ENCODE measurements at regions of chr1 and their contacts with region 1.

Region 1: DNA sequence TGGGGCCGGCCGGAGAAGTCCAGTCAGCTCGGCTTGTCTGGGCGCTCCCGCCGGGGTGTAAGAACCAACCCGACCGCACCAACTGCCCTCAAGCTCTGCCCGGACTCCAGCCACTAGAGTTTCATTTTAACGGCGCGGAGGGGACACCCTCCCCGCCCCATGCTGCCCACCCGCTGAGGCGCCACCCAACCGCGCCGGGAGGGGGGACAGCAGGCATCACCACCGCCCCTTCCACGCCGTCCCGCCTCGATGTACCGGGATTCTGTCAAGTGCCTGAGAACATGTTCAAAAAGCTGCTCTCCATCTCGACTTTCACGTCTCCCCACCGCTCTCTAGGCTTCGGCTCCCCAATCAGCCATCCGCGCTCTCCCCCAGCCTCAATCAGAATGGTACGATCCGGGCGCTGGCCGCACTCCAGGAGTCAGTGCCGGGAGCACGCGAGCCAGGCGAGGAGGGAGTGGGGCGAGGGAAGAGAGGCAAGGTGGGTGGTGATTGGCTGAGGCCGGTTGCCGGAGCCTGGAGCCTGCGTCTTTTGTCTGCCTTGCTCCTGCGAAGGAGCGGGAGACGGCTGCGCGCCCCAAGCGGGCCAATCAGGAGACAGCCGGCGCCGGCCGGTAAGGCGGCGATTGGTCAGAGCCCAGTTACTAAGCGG is at the start of gene PIK3R3:
- DNase-seq: peak; percentile 98
- H3K4me3 Mint-ChIP-seq: peak within 1 kb of the TSS; percentile 75
- H3K27ac Mint-ChIP-seq: peak within 1 kb of the TSS; percentile 100
- H3K4me1 Mint-ChIP-seq: peaks cover 43% of the 10 kb centered on the region
- H3K27me3 Mint-ChIP-seq: no peaks in the 10 kb centered on the region
- CTCF ChIP-seq: no peak
- total RNA-seq, gene PIK3R3: 8.0 and 9.3 TPM in 2 replicates

Region 2: DNA sequence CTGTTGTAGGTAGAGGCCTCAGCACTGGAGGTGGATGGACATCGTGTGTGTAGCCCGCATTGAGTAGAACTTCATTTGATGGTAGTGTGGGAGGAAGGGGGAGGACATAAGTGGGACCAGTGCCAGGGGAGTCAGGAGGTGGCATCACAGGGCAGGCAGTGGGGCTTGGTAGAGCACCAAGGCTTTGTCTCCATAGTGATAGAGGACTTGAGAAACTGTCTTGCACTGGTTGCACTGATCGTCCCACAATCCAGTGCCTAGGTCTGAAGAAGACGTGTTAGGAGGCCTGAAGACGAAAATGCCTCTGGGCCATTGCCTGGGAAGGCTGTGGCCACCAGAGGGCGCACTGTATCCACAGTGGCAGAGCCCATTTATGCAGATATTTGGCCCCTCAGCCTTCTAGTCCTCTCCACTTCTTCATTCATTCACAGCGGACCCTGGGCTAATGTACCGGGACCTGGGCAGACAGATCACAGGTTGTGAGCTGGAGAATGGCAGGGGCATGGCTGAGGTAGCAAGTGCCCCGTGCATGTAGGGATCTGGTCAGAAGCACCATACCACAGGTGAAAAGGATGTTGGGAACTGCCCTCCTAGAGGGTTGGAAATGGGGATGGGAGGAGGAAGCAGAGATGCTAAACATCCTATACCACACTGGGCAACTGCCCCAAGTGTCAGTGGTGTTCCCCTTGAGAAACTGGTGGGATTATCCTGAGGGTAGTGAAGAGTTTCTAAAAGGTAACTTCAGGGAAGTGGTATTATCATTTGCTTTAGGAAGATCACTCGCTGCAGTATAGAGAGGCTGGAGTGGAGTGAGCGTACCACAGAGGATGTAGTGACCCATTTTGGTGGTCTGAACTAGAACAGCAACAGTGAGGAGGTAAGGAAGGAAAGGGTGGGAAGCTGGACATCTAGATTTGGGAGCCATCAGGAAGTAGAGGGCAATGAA is 95.5 kb before region 1 on chr1:
- CTCF ChIA-PET with region 1: interaction called, 11 read pairs
- POLR2A ChIA-PET with region 1: interaction called, 51 read pairs
- intact Hi-C with region 1: loop called (anchors 1 kb)
- DNase-seq: peak; percentile 83
- H3K4me3 Mint-ChIP-seq: no peak overlapping the region
- H3K27ac Mint-ChIP-seq: no peak overlapping the region
- H3K4me1 Mint-ChIP-seq: no peaks in the 10 kb centered on the region
- H3K27me3 Mint-ChIP-seq: no peaks in the 10 kb centered on the region
- CTCF ChIP-seq: peak; percentile 97

Region 3: GRCh38 chr1:46065405-46065804 is 67.2 kb before region 1 on chr1:
- CTCF ChIA-PET with region 1: interaction called, 4 read pairs
- POLR2A ChIA-PET with region 1: interaction called, 40 read pairs
- intact Hi-C with region 1: no loop called
- DNase-seq: no peak
- H3K4me3 Mint-ChIP-seq: peak overlapping the region; percentile 10
- H3K27ac Mint-ChIP-seq: no peak overlapping the region
- H3K4me1 Mint-ChIP-seq: peaks cover 4% of the 10 kb centered on the region
- H3K27me3 Mint-ChIP-seq: no peaks in the 10 kb centered on the region
- CTCF ChIP-seq: no peak

Region 4: DNA sequence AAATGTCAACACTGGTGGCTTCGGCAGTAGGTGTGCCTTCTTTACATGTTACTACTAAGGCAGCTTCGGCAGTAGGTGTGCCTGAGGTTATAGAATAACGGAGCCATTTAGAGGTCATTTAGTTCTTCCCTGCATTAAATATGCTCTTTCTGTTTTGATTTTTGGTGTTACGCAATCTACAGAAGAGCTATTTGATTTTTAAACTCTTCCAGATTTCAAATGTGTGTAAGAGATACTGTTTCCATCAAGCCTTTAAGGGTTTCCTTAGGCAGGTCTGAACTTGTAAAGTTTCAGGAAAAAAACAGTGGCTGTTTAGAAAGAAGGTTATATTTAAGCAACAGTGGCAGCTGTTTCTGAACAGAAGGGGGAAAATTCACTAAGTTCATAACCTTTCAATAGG is 55.0 kb before region 1 on chr1:
- CTCF ChIA-PET with region 1: no interaction called
- POLR2A ChIA-PET with region 1: interaction called, 40 read pairs
- intact Hi-C with region 1: no loop called
- DNase-seq: peak; percentile 64
- H3K4me3 Mint-ChIP-seq: peak overlapping the region; percentile 49
- H3K27ac Mint-ChIP-seq: peak overlapping the region; percentile 81
- H3K4me1 Mint-ChIP-seq: peaks cover 12% of the 10 kb centered on the region
- H3K27me3 Mint-ChIP-seq: no peaks in the 10 kb centered on the region
- CTCF ChIP-seq: no peak

Region 5: GRCh38 chr1:46084553-46085451 is 47.9 kb before region 1 on chr1:
- CTCF ChIA-PET with region 1: interaction called, 6 read pairs
- POLR2A ChIA-PET with region 1: interaction called, 53 read pairs
- intact Hi-C with region 1: no loop called
- DNase-seq: peak; percentile 23
- H3K4me3 Mint-ChIP-seq: peak overlapping the region; percentile 8
- H3K27ac Mint-ChIP-seq: peak overlapping the region; percentile 75
- H3K4me1 Mint-ChIP-seq: peaks cover 41% of the 10 kb centered on the region
- H3K27me3 Mint-ChIP-seq: no peaks in the 10 kb centered on the region
- CTCF ChIP-seq: no peak

Region 6: GRCh38 chr1:46173361-46173856 is 40.8 kb after region 1 on chr1:
- CTCF ChIA-PET with region 1: interaction called, 4 read pairs
- POLR2A ChIA-PET with region 1: interaction called, 68 read pairs
- intact Hi-C with region 1: no loop called
- DNase-seq: no peak
- H3K4me3 Mint-ChIP-seq: no peak overlapping the region
- H3K27ac Mint-ChIP-seq: no peak overlapping the region
- H3K4me1 Mint-ChIP-seq: peaks cover 17% of the 10 kb centered on the region
- H3K27me3 Mint-ChIP-seq: no peaks in the 10 kb centered on the region
- CTCF ChIP-seq: no peak